Left colon (tissue), 2 donors: ENCODE measurements at regions of chr14 and their contacts with region 1.

Region 1: GRCh38 chr14:60091550-60092530 is at the start of gene PCNX4:
- DNase-seq: peak; percentile 97
- ATAC-seq: peak; percentile 94
- total RNA-seq, gene PCNX4: 24.9 to 27.6 TPM

Region 2: GRCh38 chr14:60166142-60166541 is 74.3 kb after region 1 on chr14:
- intact Hi-C with region 1: loop called in 1 of 2 experiments (anchors 2 kb)
- DNase-seq: no peak
- ATAC-seq: no peak